ENCODE measurements at regions of chr11 and their contacts with region 1.

Region 1: GRCh38 chr11:102495161-102496042 is 35.1 kb downstream of the MMP7 start:
- DNase-seq: peak in 3 of 6 donors; percentile 34 to 68 (median 41)
- ATAC-seq: peak; percentile 81 to 94 (median 92)
- H3K4me3 ChIP-seq: no peak overlapping the region
- H3K27ac ChIP-seq: no peak overlapping the region
- H3K4me1 ChIP-seq: peaks cover 0 to 10% (median 9%) of the 10 kb centered on the region in 3 donors
- H3K27me3 ChIP-seq: no peaks in the 10 kb centered on the region
- CTCF ChIP-seq: peak; percentile 34 to 60 (median 39)

Region 2: GRCh38 chr11:102341844-102342318 is 153.5 kb before region 1 on chr11:
- intact Hi-C with region 1: loop called in 1 of 3 experiments (anchors 5 kb)
- DNase-seq: peak in 4 of 6 donors; percentile 59 to 79 (median 70)
- ATAC-seq: peak; percentile 58 to 80 (median 77)
- H3K4me3 ChIP-seq: no peak overlapping the region
- H3K27ac ChIP-seq: no peak overlapping the region
- H3K4me1 ChIP-seq: peaks cover 0 to 8% (median 0%) of the 10 kb centered on the region in 3 donors
- H3K27me3 ChIP-seq: no peaks in the 10 kb centered on the region
- CTCF ChIP-seq: peak; percentile 54 to 67 (median 66)

Region 3: DNA sequence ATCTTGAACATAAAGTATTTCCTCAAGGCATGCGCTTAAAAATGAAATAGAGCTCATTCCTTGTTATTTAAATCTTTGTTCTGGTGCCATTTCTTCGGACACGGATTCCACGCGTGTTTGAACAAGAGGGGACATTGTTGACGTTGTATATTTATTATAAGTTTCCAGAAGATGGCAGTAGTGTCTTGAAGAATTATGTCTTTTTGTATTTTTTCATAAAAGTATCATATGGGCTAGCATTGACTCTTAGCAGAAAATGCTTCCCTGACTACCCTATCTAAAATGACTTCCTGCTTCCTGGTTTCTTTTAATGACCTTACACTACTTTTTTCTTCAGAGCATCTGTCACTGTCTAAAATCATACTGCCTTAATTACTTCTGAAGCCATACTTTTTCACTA is 128.0 kb before region 1 on chr11:
- intact Hi-C with region 1: loop called in 1 of 3 experiments (anchors 10 kb)
- DNase-seq: no peak
- ATAC-seq: peak; percentile 28 to 59 (median 50)
- H3K4me3 ChIP-seq: no peak overlapping the region
- H3K27ac ChIP-seq: peak overlapping the region in 2 of 4 donors; percentile 28
- H3K4me1 ChIP-seq: no peaks in the 10 kb centered on the region
- H3K27me3 ChIP-seq: no peaks in the 10 kb centered on the region
- CTCF ChIP-seq: no peak

Measured in pancreas (tissue), 10 donors.